Activated CD8-positive, alpha-beta T cell treated with anti-CD3 and anti-CD28 coated beads for 36 hours (primary cell): ENCODE measurements at regions of chr12 and their contacts with region 1.

Region 1: GRCh38 chr12:46372544-46373110 is at the start of gene SLC38A2:
- DNase-seq: peak; percentile 97
- ATAC-seq: peak; percentile 86
- H3K4me3 Mint-ChIP-seq: peak within 1 kb of the TSS; percentile 96
- H3K27ac Mint-ChIP-seq: peak within 1 kb of the TSS; percentile 99
- H3K4me1 Mint-ChIP-seq: peaks cover 52% of the 10 kb centered on the region
- H3K27me3 Mint-ChIP-seq: peaks cover 4% of the 10 kb centered on the region
- CTCF ChIP-seq: no peak
- total RNA-seq, gene SLC38A2: 216 to 219 TPM

Region 2: DNA sequence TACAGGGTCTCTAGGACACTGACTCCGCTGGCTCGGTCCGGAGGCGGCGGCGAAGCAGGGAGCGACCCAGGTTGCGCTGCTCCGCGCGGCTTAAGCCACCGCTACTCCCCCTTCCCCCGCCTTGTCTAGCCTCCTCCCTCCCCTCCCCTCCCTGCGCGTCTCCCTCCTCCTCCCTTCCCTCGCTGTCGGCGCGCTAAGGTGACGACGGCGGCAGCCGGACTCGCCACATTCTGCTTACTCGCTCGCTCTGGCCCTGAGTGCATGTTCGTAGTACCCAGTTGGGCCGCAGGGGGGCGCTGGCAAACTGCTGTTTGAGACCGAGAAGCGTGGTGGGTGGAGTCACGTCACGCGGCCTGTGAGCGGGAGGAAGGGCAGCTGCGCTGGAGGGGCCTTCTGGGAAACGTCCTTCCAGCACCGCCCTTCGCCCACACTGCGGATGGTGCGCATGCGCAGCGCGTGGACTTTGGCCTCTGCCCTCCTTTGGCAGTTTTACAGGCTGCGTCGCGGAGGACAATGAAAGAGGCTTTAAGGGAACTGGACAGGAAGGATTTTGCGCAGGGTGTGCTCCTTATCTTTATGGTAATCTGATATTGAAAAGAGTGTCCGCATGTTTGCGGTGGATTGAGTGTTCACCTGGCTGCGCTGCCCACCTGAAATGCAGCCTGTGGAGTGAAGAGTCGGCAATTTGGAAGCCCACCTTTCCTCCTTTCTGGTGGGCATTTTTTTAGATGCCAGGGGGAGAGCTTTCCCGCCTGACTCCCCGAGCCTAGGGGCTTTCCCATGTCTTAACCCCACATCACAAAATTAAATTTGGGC is 382.0 kb before region 1 on chr12 and contains the start of gene SCAF11:
- CTCF ChIA-PET with region 1: interaction called, 3 read pairs
- POLR2A ChIA-PET with region 1: interaction called, 4 read pairs
- intact Hi-C with region 1: loop called (anchors 10 kb)
- DNase-seq: peak; percentile 100
- ATAC-seq: peak; percentile 87
- H3K4me3 Mint-ChIP-seq: peak within 1 kb of the TSS; percentile 87
- H3K27ac Mint-ChIP-seq: peak within 1 kb of the TSS; percentile 98
- H3K4me1 Mint-ChIP-seq: peaks cover 36% of the 10 kb centered on the region
- H3K27me3 Mint-ChIP-seq: no peaks in the 10 kb centered on the region
- CTCF ChIP-seq: peak; percentile 74
- total RNA-seq, gene SCAF11: 110 to 117 TPM

Region 3: GRCh38 chr12:46268590-46269558 is 103.8 kb before region 1 on chr12 and contains the start of gene SLC38A1:
- CTCF ChIA-PET with region 1: interaction called, 4 read pairs
- POLR2A ChIA-PET with region 1: interaction called, 98 read pairs
- intact Hi-C with region 1: loop called (anchors 5 kb)
- DNase-seq: peak; percentile 92
- ATAC-seq: peak; percentile 57
- H3K4me3 Mint-ChIP-seq: no peak within 1 kb of the TSS
- H3K27ac Mint-ChIP-seq: no peak within 1 kb of the TSS
- H3K4me1 Mint-ChIP-seq: peaks cover 29% of the 10 kb centered on the region
- H3K27me3 Mint-ChIP-seq: no peaks in the 10 kb centered on the region
- CTCF ChIP-seq: no peak
- total RNA-seq, gene SLC38A1: 167 to 168 TPM

Region 4: DNA sequence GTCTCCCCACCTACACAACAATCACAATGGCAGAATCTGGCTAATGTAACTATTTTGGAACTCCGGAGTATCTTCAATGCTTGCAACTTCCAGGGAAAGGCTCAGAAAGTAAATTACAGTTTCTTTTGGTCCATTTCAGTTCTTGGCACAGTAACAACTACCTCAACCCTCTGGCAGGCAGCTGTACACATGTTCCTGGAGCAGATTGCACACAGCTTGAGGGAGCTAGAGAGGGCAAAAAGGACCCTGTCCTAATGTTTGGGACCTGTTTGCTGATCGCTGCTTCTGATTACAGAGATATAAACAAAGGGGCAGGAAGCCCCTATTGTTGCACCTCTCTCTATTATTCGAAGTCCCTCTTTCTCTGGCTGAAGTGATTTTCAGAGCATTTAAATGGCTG is 68.6 kb before region 1 on chr12:
- CTCF ChIA-PET with region 1: no interaction called
- POLR2A ChIA-PET with region 1: no interaction called
- intact Hi-C with region 1: no loop called
- DNase-seq: no peak
- ATAC-seq: no peak
- H3K4me3 Mint-ChIP-seq: no peak overlapping the region
- H3K27ac Mint-ChIP-seq: no peak overlapping the region
- H3K4me1 Mint-ChIP-seq: peaks cover 7% of the 10 kb centered on the region
- H3K27me3 Mint-ChIP-seq: no peaks in the 10 kb centered on the region
- CTCF ChIP-seq: no peak

Region 5: GRCh38 chr12:46382964-46383653 is 10.5 kb after region 1 on chr12:
- CTCF ChIA-PET with region 1: interaction called, 3 read pairs
- POLR2A ChIA-PET with region 1: interaction called, 83 read pairs
- intact Hi-C with region 1: no loop called
- DNase-seq: peak; percentile 95
- ATAC-seq: peak; percentile 81
- H3K4me3 Mint-ChIP-seq: peak overlapping the region; percentile 89
- H3K27ac Mint-ChIP-seq: peak overlapping the region; percentile 94
- H3K4me1 Mint-ChIP-seq: peaks cover 46% of the 10 kb centered on the region
- H3K27me3 Mint-ChIP-seq: no peaks in the 10 kb centered on the region
- CTCF ChIP-seq: no peak

Region 6: GRCh38 chr12:46414591-46415268 is 42.1 kb after region 1 on chr12:
- CTCF ChIA-PET with region 1: no interaction called
- POLR2A ChIA-PET with region 1: no interaction called
- intact Hi-C with region 1: no loop called
- DNase-seq: no peak
- ATAC-seq: no peak
- H3K4me3 Mint-ChIP-seq: no peak overlapping the region
- H3K27ac Mint-ChIP-seq: no peak overlapping the region
- H3K4me1 Mint-ChIP-seq: no peaks in the 10 kb centered on the region
- H3K27me3 Mint-ChIP-seq: no peaks in the 10 kb centered on the region
- CTCF ChIP-seq: no peak

Region 7: GRCh38 chr12:46470036-46470627 is 97.5 kb after region 1 on chr12:
- CTCF ChIA-PET with region 1: no interaction called
- POLR2A ChIA-PET with region 1: interaction called, 13 read pairs
- intact Hi-C with region 1: no loop called
- DNase-seq: peak; percentile 74
- ATAC-seq: peak; percentile 97
- H3K4me3 Mint-ChIP-seq: peak overlapping the region; percentile 85
- H3K27ac Mint-ChIP-seq: peak overlapping the region; percentile 95
- H3K4me1 Mint-ChIP-seq: peaks cover 19% of the 10 kb centered on the region
- H3K27me3 Mint-ChIP-seq: no peaks in the 10 kb centered on the region
- CTCF ChIP-seq: no peak

Region 8: DNA sequence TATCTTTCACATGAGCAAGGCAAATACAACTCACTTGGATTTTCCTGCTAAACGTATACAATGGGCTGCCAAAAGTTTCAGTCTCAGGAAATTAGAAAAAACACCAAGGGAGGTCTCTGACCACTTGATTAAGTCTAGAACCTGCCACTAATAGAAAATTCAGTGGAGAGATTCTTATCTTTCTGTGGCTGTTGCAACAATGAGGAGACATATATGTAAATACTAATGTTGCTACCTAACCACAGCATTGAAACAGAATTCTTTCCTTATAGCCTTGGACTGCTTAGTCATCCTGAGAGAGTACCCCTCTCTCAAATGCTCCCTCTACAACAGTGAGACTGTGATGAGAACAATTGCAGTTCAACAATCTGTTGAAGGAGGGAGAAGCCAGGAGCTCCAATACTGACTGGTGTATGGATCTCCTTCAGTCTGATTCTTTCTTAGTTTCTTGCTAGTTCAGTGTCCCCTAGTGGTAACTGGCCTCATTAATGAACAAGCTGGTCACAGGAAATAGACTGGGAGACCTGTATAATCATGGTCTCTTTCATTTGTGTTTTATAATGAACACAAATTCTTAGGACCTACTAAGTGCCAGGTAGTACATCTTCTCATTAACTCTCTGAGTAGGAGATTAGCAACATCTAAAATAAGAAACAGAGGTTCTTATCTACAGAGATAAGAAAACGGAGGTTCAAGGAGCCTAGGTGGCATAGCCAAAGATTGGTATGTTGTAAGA is 288.7 kb after region 1 on chr12:
- CTCF ChIA-PET with region 1: no interaction called
- POLR2A ChIA-PET with region 1: no interaction called
- intact Hi-C with region 1: loop called (anchors 10 kb)
- DNase-seq: peak; percentile 16
- ATAC-seq: peak; percentile 75
- H3K4me3 Mint-ChIP-seq: no peak overlapping the region
- H3K27ac Mint-ChIP-seq: no peak overlapping the region
- H3K4me1 Mint-ChIP-seq: peaks cover 37% of the 10 kb centered on the region
- H3K27me3 Mint-ChIP-seq: no peaks in the 10 kb centered on the region
- CTCF ChIP-seq: peak; percentile 70